GM10248 (cell line): ENCODE measurements at regions of chr12 and their contacts with region 1.

Region 1: DNA sequence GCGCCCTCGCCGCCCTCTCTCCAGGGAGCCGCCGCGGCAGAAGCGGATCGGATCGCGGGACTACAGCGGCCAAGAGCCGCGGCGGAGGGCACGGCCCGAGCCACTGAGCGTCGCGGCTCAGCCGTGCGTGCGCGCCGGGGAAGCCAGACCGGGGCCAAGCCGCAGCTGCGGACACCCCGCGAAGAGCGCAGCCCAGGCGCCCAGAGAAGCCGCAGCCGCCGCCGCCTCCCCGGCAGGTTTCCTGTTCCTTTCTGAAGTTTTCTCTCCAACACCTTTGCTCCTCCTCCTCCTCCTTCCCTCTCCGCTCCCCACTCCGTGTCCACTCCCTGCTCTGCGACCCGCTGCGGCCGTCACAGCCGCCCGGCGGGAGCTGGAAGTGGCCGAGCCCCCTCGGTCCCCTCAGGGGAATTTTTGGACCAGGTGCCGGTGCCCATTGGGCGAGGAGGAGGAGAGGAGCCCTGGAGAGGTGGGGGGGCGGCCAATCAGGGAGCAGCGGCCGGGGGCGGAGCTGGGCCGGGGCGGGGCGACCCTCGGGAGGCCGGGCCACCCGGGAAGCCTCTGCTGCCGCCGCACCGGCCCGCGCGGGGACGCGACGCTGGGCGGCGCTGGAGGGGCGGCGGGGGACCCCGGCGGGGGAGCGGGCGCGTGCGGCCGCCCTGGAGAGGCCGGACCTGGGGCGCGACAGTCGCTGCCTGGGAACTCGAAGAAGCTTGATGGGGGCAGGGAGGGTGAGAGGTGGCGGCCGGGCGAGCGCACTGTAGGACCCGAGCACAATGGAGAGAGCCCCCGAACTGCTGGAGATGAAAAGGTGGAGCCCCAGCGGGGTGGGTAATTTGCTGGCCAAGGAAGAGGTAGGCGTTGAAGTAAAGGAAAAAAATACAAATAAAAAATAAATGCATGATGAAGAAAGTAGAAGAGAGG is at the start of gene ITPR2:
- DNase-seq: peak; percentile 99
- CTCF ChIP-seq: peak; percentile 66

Region 2: GRCh38 chr12:26599096-26599695 is 233.9 kb before region 1 on chr12:
- CTCF ChIA-PET with region 1: no interaction called
- POLR2A ChIA-PET with region 1: no interaction called
- DNase-seq: no peak
- CTCF ChIP-seq: no peak

Region 3: DNA sequence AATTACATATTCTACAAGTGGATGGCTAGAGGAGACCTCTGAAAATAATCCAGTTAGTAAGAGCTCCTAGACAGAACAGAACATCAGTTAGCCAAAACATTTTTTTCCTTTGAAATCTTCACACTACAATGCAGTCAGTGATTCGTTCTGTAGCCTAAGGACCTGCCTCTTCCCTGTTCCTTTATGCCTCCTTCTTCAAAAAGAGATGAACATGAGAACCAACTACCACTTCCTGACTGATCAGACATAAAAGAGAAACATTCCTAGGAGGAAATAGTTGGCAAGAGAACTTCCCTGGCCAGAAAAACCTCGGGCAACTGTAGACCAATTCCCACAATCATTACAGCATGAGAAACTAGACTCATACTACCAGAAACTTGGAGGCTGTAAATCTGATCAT is 29.5 kb before region 1 on chr12:
- CTCF ChIA-PET with region 1: interaction called, 10 read pairs
- POLR2A ChIA-PET with region 1: no interaction called
- DNase-seq: no peak
- CTCF ChIP-seq: no peak

Region 4: GRCh38 chr12:26808766-26809476 is 24.2 kb before region 1 on chr12:
- CTCF ChIA-PET with region 1: interaction called, 15 read pairs
- POLR2A ChIA-PET with region 1: interaction called, 3 read pairs
- DNase-seq: no peak
- CTCF ChIP-seq: no peak

Region 5: GRCh38 chr12:26821212-26821701 is 11.8 kb before region 1 on chr12:
- CTCF ChIA-PET with region 1: interaction called, 31 read pairs
- POLR2A ChIA-PET with region 1: interaction called, 5 read pairs
- DNase-seq: no peak
- CTCF ChIP-seq: no peak

Region 6: GRCh38 chr12:26845057-26845666 is 12.1 kb after region 1 on chr12:
- CTCF ChIA-PET with region 1: interaction called, 26 read pairs
- POLR2A ChIA-PET with region 1: interaction called, 5 read pairs
- DNase-seq: no peak
- CTCF ChIP-seq: peak; percentile 44

Region 7: GRCh38 chr12:26853303-26854030 is 20.4 kb after region 1 on chr12:
- CTCF ChIA-PET with region 1: interaction called, 14 read pairs
- POLR2A ChIA-PET with region 1: no interaction called
- DNase-seq: peak; percentile 75
- CTCF ChIP-seq: peak; percentile 88

Region 8: DNA sequence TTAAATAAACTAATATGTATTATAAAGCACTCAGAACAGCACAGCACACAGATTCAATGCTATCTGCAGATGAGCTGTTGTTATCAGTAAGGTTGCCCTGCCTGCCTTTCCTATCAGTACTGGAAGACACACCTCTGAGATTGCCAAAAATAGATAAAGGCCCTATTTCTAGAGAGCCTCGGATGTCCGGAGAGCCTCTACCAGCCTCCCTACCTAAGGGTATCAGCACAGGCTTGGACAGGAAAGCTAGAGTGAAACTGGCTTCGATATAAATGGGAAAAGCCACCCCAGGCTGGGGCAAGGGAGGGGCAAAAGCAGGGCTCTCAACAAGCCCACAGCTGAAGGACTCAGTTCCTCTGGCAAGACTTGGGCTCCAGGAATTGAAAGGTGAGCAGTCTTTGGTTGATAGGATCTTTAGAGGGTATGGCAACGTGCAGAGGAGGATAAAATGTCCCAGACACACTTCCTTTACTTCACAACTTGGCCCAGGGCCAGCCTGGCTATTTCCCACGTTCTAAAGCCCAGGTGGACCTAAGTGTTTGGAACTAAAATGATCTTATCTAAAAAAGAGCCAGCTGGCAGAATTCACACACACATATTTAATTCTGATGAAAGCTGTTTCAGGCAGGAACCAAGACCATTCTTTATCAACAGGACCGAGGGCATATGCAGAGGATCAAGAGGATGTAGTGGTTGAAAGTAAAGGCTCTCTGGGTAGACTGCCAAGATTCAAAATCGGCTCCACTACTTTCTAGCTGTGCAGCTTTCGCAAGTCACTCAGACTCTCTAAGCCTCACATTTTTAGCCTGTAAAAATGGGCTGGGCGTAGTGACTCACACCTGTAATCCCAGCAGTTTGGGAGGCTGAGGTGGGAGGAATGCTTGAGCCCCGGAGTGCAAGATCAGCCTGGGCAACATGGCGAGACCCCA is 37.7 kb after region 1 on chr12:
- CTCF ChIA-PET with region 1: interaction called, 19 read pairs
- POLR2A ChIA-PET with region 1: interaction called, 3 read pairs
- DNase-seq: no peak
- CTCF ChIP-seq: no peak